Endothelial cell of umbilical vein (primary cell): ENCODE measurements at regions of chr15 and their contacts with region 1.

Region 1: GRCh38 chr15:62742409-62743171 is 300.0 kb upstream of the TPM1 start:
- DNase-seq: peak; percentile 64
- H3K4me3 ChIP-seq: no peak overlapping the region
- H3K27ac ChIP-seq: no peak overlapping the region
- H3K4me1 ChIP-seq: no peaks in the 10 kb centered on the region
- H3K27me3 ChIP-seq: no peaks in the 10 kb centered on the region
- CTCF ChIP-seq: peak; percentile 83 to 89
- POLR2A ChIP-seq: no peak

Region 2: DNA sequence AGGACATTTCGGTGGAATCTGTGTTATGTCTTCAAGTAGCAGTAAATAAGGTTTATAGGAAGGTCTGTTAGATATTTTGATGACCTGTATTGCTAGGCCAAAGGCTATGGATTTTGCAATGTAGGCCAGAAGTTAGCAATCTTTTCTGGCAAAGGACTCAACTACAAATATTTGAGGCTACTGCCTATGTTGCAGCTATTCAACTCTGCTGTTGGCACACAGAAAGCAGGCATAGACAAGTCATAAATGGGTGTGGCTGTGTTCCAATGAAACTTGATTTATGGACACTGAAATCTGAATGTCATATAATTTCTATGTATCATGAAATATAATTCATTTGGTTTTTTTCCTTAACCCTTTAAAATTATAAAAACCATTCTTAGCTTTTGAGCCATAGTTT is 138.8 kb before region 1 on chr15:
- CTCF ChIA-PET with region 1: no interaction called
- POLR2A ChIA-PET with region 1: no interaction called
- dilution Hi-C with region 1: no loop called
- intact Hi-C with region 1: no loop called
- DNase-seq: no peak
- H3K4me3 ChIP-seq: no peak overlapping the region
- H3K27ac ChIP-seq: no peak overlapping the region
- H3K4me1 ChIP-seq: no peaks in the 10 kb centered on the region
- H3K27me3 ChIP-seq: no peaks in the 10 kb centered on the region
- CTCF ChIP-seq: no peak
- POLR2A ChIP-seq: no peak

Region 3: DNA sequence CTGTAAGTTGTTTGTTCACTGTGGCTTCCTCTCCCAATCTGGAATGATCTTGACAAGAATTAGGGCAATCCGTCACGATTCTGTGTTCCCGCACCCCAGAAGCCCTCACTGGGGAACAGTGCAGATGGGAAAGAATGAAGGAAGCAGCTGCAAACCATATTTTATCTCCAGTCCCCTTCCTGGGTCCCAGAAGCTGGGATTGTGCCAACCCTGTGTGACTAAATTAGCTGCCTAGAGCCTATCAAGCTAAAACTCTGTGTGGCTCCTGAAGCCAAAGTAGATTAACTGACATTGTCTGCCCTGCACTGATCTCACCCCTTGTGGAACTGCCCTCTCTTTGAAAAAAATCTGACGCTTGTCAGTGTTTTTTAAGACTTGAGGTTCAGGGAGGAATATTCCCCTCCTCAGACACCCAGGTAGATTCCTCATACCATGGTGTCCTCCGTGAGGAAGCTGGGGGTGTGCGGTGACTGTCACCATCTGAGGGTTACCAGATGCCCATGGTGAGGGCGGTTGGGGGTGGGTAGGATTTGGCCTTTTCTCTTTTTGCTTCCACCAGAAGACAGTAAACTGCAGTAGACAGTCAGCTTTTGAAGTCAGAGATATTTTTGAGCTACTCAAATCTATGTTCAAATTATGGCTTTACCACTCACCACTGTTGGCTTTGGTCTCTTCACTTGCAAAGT is 58.3 kb before region 1 on chr15:
- CTCF ChIA-PET with region 1: interaction called, 12 read pairs
- POLR2A ChIA-PET with region 1: no interaction called
- dilution Hi-C with region 1: no loop called
- intact Hi-C with region 1: no loop called
- DNase-seq: no peak
- H3K4me3 ChIP-seq: no peak overlapping the region
- H3K27ac ChIP-seq: no peak overlapping the region
- H3K4me1 ChIP-seq: no peaks in the 10 kb centered on the region
- H3K27me3 ChIP-seq: no peaks in the 10 kb centered on the region
- CTCF ChIP-seq: no peak
- POLR2A ChIP-seq: no peak

Region 4: GRCh38 chr15:62732078-62732477 is 10.5 kb before region 1 on chr15:
- CTCF ChIA-PET with region 1: interaction called, 41 read pairs
- POLR2A ChIA-PET with region 1: no interaction called
- dilution Hi-C with region 1: no loop called
- intact Hi-C with region 1: no loop called
- DNase-seq: no peak
- H3K4me3 ChIP-seq: no peak overlapping the region
- H3K27ac ChIP-seq: no peak overlapping the region
- H3K4me1 ChIP-seq: no peaks in the 10 kb centered on the region
- H3K27me3 ChIP-seq: peaks cover 5 to 25% of the 10 kb centered on the region in 2 experiments
- CTCF ChIP-seq: no peak
- POLR2A ChIP-seq: no peak

Region 5: GRCh38 chr15:62758126-62758951 is 15.7 kb after region 1 on chr15:
- CTCF ChIA-PET with region 1: interaction called, 19 read pairs
- POLR2A ChIA-PET with region 1: no interaction called
- dilution Hi-C with region 1: no loop called
- intact Hi-C with region 1: no loop called
- DNase-seq: peak; percentile 38
- H3K4me3 ChIP-seq: no peak overlapping the region
- H3K27ac ChIP-seq: no peak overlapping the region
- H3K4me1 ChIP-seq: no peaks in the 10 kb centered on the region
- H3K27me3 ChIP-seq: no peaks in the 10 kb centered on the region
- CTCF ChIP-seq: no peak
- POLR2A ChIP-seq: no peak